Endothelial cell of umbilical vein (primary cell): ENCODE measurements at regions of chr19 and their contacts with region 1.

Region 1: GRCh38 chr19:36489118-36489919 is at the start of gene ZNF566:
- DNase-seq: peak; percentile 97
- H3K4me3 ChIP-seq: peak within 1 kb of the TSS; percentile 51 to 80 (median 77)
- H3K27ac ChIP-seq: peak within 1 kb of the TSS; percentile 85
- H3K4me1 ChIP-seq: peaks cover 8% of the 10 kb centered on the region
- H3K27me3 ChIP-seq: no peaks in the 10 kb centered on the region
- CTCF ChIP-seq: peak in 1 of 2 donors; percentile 10
- POLR2A ChIP-seq: no peak
- total RNA-seq, gene ZNF566: 8.3 and 8.5 TPM in 2 replicates

Region 2: DNA sequence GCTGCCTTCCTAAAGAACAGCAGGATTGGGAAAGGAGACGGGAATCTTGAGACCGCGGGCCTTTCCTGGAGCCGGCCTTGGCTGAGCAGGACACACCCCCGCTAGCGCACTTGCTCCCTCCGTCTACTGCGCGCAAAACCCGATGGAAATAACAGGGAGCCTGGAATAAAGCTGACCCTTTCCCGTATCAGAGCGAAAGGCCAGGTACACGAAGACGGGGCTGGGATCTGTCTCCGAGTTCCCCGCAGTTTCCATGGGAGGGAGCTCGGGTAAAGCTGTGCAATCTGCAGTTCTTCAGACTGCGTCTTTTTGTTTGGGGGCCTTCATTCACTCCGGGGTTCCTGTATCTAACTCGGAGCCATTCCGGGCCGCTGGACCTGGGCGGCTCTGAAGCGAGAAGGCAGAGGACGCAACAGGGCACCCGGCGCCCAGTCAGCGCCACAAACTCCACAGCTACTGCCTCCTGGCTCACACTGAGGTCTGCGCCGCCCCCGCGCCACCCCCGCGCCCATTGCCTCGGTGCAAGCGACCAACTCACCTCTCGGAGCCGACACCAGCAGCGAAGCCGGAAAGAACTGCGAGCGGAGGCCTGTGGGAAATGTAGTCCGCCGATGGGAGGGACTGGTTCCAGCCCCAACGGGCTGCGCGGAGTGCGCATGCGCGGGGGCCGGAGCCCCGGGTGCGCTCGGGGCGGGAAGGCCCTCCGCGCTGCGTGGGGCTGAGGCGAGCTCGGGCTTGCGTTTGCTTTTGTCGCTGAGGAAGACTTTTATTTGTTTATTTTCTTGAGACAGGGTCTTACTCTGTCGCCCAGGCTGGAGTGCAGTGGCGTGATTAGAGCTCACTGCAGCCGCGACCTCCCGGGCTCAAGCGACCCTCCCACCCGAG is 110.5 kb before region 1 on chr19 and contains the start of gene ZFP14:
- CTCF ChIA-PET with region 1: interaction called, 3 read pairs
- POLR2A ChIA-PET with region 1: interaction called, 7 read pairs
- dilution Hi-C with region 1: no loop called
- intact Hi-C with region 1: loop called (anchors 1 kb)
- DNase-seq: peak; percentile 94
- H3K4me3 ChIP-seq: peak within 1 kb of the TSS; percentile 62 to 87 (median 78)
- H3K27ac ChIP-seq: no peak within 1 kb of the TSS
- H3K4me1 ChIP-seq: peaks cover 7% of the 10 kb centered on the region
- H3K27me3 ChIP-seq: no peaks in the 10 kb centered on the region
- CTCF ChIP-seq: peak in 1 of 2 donors; percentile 20
- POLR2A ChIP-seq: peak; percentile 58
- total RNA-seq, gene ZFP14: 2.6 and 3.1 TPM in 2 replicates

Region 3: DNA sequence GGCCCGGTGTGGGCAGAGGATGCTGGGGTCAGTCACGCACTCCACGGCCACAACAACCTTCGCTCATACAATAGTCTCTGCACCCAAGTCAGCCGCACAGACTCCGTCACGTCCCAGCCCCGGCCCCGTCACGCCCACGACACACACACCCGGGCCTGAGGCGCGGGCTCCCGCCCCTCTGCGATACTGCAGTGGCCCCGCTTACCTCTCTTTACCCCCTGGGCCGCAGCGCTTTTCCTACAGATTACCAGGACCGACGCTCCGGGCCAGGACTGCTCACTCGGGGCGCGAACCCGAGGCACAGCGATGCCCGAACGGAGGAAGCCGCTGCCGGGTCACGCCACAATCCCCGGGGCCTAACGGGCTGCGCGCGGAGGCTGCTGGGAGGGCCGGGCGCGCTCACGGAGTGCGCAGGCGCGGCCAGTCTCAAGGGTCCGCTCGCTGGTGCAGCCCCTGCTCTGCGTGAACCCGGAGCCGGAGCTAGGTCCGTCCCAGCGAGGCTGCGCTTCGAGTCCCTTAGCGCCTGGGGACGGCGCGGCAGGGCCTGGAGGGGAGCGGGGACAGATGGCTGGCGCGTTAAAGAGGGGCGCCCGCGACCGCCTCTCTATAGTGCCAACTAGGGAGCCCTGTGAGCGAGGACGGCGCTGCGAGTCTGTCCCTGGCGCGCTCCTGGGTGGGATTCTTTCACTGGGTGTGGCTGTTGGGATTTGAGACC is 70.9 kb before region 1 on chr19 and contains the start of gene ZFP82:
- CTCF ChIA-PET with region 1: no interaction called
- POLR2A ChIA-PET with region 1: no interaction called
- dilution Hi-C with region 1: no loop called
- intact Hi-C with region 1: loop called (anchors 1 kb)
- DNase-seq: peak; percentile 88
- H3K4me3 ChIP-seq: peak within 1 kb of the TSS; percentile 70 to 74 (median 71)
- H3K27ac ChIP-seq: peak within 1 kb of the TSS; percentile 72
- H3K4me1 ChIP-seq: peaks cover 11% of the 10 kb centered on the region
- H3K27me3 ChIP-seq: no peaks in the 10 kb centered on the region
- CTCF ChIP-seq: no peak
- POLR2A ChIP-seq: peak; percentile 76
- total RNA-seq, gene ZFP82: 3.7 and 3.9 TPM in 2 replicates